ENCODE measurements at regions of chr3 and their contacts with region 1.

Region 1: DNA sequence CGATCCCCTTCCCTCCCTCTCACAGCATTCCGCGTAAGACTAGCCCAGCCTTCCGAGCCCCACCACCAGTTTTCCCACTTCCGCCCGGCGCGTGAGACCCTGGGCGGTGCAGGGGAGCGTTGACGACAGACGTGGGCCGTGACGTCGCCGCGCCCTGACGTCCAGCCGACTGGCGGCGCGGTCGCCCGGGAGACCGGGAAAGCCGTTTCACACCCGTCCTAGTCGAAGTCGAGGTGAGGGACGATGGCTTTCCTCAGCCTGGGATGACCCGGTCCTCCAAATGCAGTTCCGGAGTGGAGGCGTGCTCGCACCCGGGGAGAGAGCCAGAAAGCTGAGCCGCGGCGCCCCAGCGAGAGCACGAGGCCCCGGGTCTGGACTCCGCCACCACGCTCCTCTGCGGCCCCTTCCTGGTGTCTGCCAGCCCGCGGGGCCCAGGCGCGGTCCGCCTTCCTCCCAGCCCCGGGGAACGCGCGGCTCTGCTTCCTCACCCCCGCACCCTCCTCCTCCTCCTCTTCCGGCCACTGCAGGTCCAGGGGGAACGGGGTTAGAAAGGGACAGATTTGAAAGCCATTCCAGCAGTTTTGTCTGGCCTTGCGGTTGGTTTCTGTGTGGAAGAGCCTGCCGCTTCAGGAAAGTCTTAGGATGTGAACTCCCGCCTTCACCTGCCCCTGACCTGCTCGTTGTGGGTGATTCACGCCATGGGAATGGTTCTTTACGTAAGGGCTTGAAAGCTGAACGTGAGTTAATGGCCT is at the start of gene LEKR1:
- DNase-seq: peak; percentile 93
- ATAC-seq: peak; percentile 97
- total RNA-seq, gene LEKR1: 0.78 TPM

Region 2: DNA sequence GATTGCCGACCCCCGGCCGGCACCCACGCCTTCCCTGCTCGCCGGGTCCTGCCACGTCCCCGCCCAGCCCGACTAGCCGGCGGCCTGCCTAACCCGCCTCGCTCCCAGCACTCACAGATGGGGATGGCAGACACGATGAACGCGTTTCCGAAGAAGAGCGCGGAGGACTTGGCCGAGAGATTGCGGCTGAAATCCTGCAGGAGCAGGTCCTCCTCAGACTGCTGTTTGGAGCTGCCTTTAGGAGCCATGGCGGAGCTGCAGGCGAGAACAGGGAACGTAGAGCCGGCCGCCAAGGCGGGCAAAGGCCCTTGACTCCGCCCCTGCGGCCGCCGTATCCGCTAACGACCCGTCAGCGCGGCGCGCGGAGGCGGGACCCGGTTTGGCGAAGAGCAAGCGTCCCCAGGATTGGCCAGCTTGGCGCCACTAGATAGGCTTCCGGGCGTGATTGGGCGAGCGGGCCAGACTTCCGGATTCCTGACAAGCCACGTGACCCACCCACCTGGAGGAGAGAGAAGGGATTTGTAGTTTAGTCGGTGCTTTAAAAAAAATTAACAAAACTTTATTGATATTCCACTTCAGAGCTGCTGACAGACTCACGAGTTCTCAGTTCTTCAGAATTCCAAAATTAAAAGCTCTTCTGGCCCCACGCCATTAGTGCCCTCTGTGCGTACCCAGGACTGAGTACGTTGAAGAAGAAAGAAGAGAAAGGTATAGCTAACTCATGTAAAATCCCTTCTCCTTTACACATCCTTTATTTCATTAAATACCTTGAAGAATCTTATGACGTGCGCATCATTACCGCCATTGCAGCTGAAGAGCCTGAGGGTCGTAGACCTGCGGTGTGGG is 271.3 kb before region 1 on chr3 and contains the start of gene SSR3:
- intact Hi-C with region 1: loop called (anchors 5 kb)
- DNase-seq: peak; percentile 100
- ATAC-seq: peak; percentile 99
- total RNA-seq, gene SSR3: 195 TPM

Region 3: GRCh38 chr3:157081681-157082210 is 255.4 kb after region 1 on chr3:
- intact Hi-C with region 1: no loop called
- DNase-seq: peak; percentile 95
- ATAC-seq: peak; percentile 84

Region 4: DNA sequence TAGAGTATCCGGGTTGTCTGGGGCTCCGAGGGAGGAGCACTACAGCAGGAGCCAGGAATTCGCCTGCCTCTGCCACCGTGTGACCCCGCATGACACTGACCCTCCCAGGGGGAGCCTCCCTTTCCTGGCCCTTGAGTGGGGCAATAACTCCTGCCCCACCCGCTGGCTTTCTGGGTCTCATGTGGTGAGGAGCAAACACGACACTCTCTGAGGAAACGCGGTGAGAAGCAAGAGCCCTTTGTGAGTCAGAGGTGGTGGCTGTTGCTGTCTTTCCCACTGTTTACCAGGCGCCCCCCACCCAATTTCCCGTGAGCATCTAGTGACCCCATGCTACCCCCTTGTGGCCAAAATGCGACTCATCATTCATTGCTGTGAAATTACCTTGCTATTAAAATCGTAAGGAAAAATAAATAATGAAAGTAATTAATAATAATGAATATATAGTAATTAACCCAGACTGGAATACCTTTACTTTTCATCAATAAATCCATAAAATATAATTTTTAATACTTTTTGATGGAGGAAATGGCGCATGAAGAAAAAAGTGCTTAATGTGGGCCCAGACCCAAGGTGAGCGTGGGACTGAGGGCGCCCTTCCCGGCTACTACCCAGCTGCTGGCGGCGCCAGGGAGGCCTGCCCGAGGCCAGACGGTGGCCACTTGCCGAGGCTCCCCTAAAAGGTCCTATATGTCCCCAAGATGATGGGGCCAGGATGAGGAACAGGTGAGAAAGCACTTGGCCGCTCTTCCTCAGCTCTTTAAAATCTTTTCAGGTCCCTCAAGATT is 304.3 kb after region 1 on chr3:
- intact Hi-C with region 1: loop called (anchors 5 kb)
- DNase-seq: no peak
- ATAC-seq: no peak